H1 (cell line): ENCODE measurements at regions of chr13 and their contacts with region 1.

Region 1: DNA sequence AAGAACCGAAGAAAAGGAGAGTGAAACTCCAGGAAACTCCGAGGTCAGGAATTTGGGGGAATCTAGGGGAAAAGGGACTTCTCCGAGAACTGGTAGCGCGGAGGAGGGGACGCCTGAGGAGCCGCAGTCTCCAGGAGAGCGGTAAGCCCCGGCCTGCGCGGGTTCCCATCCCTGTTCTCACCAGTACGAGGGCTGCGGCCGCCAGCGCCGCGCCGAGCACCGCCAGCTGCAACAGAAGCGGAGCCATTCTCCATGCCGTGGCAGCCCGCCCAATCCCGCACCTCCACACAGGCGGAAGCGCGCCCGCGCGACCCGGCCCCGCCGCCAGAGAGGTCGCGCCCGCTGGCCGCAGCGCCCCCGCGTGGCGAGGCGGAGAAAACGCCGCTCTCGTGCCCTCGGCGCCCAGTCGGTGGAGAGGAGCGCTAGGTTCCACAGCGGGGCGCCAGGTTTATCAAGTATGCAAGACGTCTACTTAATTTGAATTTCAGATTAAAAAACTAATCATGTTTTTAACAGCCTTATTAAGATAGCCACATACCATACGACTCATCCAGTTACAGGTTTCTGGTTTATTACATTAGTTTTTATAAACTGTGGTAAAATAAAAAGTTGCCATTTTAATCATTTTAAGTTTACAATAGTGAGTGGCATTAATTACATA is at the start of gene ALG5:
- DNase-seq: peak; percentile 54 to 95
- H3K4me3 ChIP-seq: peak within 1 kb of the TSS; percentile 92 to 99 (median 94)
- H3K27ac ChIP-seq: peak within 1 kb of the TSS; percentile 99
- H3K4me1 ChIP-seq: no peaks in the 10 kb centered on the region
- H3K27me3 ChIP-seq: no peaks in the 10 kb centered on the region
- CTCF ChIP-seq: peak; percentile 90 to 96 (median 91)
- EP300 ChIP-seq: peak in 1 of 2 experiments; percentile 76; a peak in 1 of 3 replicates
- POLR2A ChIP-seq: peak; percentile 87 to 90
- RAD21 ChIP-seq: peak; percentile 10 to 52; a peak in 3 of 4 replicates
- total RNA-seq, gene ALG5: 24.3 and 24.6 TPM in 2 replicates

Region 2: GRCh38 chr13:36903925-36904595 is 95.1 kb before region 1 on chr13:
- CTCF ChIA-PET with region 1: no interaction called
- POLR2A ChIA-PET with region 1: no interaction called
- DNase-seq: no peak
- H3K4me3 ChIP-seq: no peak overlapping the region
- H3K27ac ChIP-seq: no peak overlapping the region
- H3K4me1 ChIP-seq: no peaks in the 10 kb centered on the region
- H3K27me3 ChIP-seq: no peaks in the 10 kb centered on the region
- CTCF ChIP-seq: no peak
- EP300 ChIP-seq: no peak
- POLR2A ChIP-seq: no peak
- RAD21 ChIP-seq: no peak

Region 3: DNA sequence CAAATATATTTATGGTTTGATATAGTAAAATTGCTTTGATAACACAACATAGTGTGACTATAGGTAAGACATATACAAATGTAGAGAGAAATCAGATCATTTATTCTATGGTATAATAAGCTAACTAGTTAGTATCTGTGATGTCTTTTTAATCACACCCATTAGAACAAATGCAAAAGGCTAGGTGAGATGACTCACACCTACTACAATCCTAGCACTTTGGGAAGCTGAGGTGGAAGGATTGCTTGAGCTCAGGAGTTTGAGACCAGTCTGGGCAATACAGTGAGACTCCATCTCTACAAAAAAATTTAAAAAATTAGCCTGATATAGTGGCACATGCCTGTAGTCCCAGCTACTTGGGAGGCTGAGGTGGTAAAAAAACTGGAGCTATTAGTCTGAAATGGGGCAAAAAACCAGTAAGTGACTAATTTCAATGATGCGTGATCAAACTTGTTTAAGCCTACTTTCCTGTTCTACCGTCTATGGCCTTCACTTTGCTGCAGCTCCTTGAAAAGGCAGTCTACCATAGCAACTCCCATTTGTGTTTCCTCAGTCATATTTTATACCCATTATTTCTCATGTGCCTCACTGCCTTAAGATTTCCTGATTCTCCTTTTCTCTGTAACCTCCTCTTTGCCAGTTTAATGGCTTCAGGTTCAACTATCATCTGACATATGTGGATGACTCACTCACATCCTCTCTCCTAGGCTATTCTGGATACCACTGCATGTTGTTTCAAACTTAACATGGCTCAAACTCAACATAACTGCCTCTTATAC is 12.5 kb before region 1 on chr13:
- CTCF ChIA-PET with region 1: interaction called, 6 read pairs
- POLR2A ChIA-PET with region 1: interaction called, 20 read pairs
- DNase-seq: no peak
- H3K4me3 ChIP-seq: no peak overlapping the region
- H3K27ac ChIP-seq: no peak overlapping the region
- H3K4me1 ChIP-seq: no peaks in the 10 kb centered on the region
- H3K27me3 ChIP-seq: no peaks in the 10 kb centered on the region
- CTCF ChIP-seq: no peak
- EP300 ChIP-seq: no peak
- POLR2A ChIP-seq: no peak
- RAD21 ChIP-seq: no peak

Region 4: DNA sequence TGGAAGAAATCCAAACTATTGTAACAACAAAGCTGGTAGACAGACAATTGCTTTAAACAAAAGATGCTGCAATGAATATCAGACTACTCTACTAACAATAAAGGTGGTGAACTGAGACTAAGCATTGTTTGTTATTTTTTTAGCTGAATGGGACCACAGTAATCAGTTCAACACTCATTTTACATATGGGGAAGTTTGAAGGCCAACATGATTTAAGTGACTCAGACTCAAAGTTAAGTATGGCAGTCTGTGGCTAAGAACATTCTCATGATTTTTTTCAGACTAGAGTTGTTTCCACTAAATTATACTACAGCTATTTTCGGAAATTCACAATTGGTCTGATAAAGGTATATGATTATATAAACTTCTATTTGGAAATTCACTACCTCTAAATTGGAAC is 11.8 kb after region 1 on chr13:
- CTCF ChIA-PET with region 1: no interaction called
- POLR2A ChIA-PET with region 1: interaction called, 59 read pairs
- DNase-seq: no peak
- H3K4me3 ChIP-seq: no peak overlapping the region
- H3K27ac ChIP-seq: no peak overlapping the region
- H3K4me1 ChIP-seq: peaks cover 0 to 3% (median 0%) of the 10 kb centered on the region in 4 experiments; a peak in 2 of 7 replicates
- H3K27me3 ChIP-seq: no peaks in the 10 kb centered on the region
- CTCF ChIP-seq: no peak
- EP300 ChIP-seq: no peak
- POLR2A ChIP-seq: no peak
- RAD21 ChIP-seq: no peak

Region 5: GRCh38 chr13:37023871-37024270 is 24.7 kb after region 1 on chr13:
- CTCF ChIA-PET with region 1: no interaction called
- POLR2A ChIA-PET with region 1: interaction called, 10 read pairs
- DNase-seq: no peak
- H3K4me3 ChIP-seq: no peak overlapping the region
- H3K27ac ChIP-seq: no peak overlapping the region
- H3K4me1 ChIP-seq: no peaks in the 10 kb centered on the region
- H3K27me3 ChIP-seq: no peaks in the 10 kb centered on the region
- CTCF ChIP-seq: no peak
- EP300 ChIP-seq: no peak
- POLR2A ChIP-seq: no peak
- RAD21 ChIP-seq: no peak